ENCODE measurements at regions of chr15 and their contacts with region 1.

Region 1: DNA sequence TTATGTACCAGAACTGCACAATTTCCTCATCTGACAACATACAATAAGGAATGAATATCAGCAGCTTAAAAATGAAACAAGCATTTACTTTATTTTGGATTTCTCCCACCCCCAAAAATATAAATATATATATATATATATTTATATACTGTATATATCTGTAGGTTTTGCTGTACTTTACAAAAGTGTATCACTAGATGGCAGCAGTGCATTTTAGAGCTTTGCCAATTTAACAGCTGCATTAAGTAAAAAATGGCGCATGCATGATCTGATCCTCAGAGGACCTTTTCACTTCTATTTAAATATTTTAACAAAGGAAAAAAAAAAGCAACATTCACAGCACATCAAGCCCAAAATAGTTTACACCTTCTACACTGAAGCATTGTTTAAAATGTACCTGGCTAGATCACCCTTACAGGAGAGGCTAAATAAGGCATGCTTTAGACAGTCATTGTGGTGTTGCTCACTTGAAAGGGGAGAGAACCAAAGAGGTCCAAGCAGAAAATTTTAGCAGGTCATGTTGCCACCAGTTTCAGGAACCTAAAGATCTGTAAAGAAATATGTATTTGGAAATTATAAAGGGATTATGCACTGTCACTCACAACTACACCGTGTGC is 72.6 kb downstream of the NPTN start:
- DNase-seq: peak; percentile 26
- H3K4me3 Mint-ChIP-seq: no peak overlapping the region
- H3K27ac Mint-ChIP-seq: no peak overlapping the region
- H3K4me1 Mint-ChIP-seq: peaks cover 18% of the 10 kb centered on the region
- H3K27me3 Mint-ChIP-seq: no peaks in the 10 kb centered on the region
- CTCF ChIP-seq: no peak

Region 2: GRCh38 chr15:73305331-73306211 is 255.0 kb before region 1 on chr15:
- CTCF ChIA-PET with region 1: interaction called, 5 read pairs
- intact Hi-C with region 1: loop called (anchors 2 kb)
- DNase-seq: peak; percentile 64
- H3K4me3 Mint-ChIP-seq: no peak overlapping the region
- H3K27ac Mint-ChIP-seq: no peak overlapping the region
- H3K4me1 Mint-ChIP-seq: no peaks in the 10 kb centered on the region
- H3K27me3 Mint-ChIP-seq: no peaks in the 10 kb centered on the region
- CTCF ChIP-seq: peak; percentile 54

Region 3: GRCh38 chr15:73621286-73621826 is 60.7 kb after region 1 on chr15:
- CTCF ChIA-PET with region 1: no interaction called
- intact Hi-C with region 1: no loop called
- DNase-seq: no peak
- H3K4me3 Mint-ChIP-seq: no peak overlapping the region
- H3K27ac Mint-ChIP-seq: no peak overlapping the region
- H3K4me1 Mint-ChIP-seq: peaks cover 9% of the 10 kb centered on the region
- H3K27me3 Mint-ChIP-seq: no peaks in the 10 kb centered on the region
- CTCF ChIP-seq: no peak

Region 4: GRCh38 chr15:73633111-73633990 is 72.7 kb after region 1 on chr15 and contains the start of gene NPTN:
- CTCF ChIA-PET with region 1: interaction called, 26 read pairs
- intact Hi-C with region 1: loop called (anchors 1 kb)
- DNase-seq: peak; percentile 100
- H3K4me3 Mint-ChIP-seq: peak within 1 kb of the TSS; percentile 70
- H3K27ac Mint-ChIP-seq: peak within 1 kb of the TSS; percentile 88
- H3K4me1 Mint-ChIP-seq: peaks cover 53% of the 10 kb centered on the region
- H3K27me3 Mint-ChIP-seq: peaks cover 21% of the 10 kb centered on the region
- CTCF ChIP-seq: no peak
- total RNA-seq, gene NPTN: 190 TPM in 2 replicates

Region 5: DNA sequence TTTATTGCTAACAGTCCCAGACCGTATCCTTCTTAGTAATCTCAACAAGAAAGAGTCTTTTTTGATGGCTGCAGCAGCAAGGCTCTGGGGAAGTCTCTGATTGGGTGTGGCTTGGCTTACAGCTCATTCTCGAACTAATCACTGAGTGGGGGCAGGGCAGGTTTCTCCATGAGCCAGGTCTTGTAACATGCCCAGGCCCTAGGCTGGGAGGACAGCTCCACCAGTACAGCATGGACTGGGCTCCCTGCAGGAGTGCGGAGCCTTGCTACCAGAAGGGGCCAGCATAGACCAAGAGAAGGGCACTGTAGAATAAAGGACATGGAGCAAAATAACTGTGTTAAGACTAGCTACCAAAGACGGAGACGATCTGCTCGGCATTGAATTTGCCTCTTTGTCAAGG is 130.8 kb after region 1 on chr15:
- CTCF ChIA-PET with region 1: interaction called, 3 read pairs
- intact Hi-C with region 1: loop called (anchors 5 kb)
- DNase-seq: no peak
- H3K4me3 Mint-ChIP-seq: no peak overlapping the region
- H3K27ac Mint-ChIP-seq: no peak overlapping the region
- H3K4me1 Mint-ChIP-seq: peaks cover 25% of the 10 kb centered on the region
- H3K27me3 Mint-ChIP-seq: no peaks in the 10 kb centered on the region
- CTCF ChIP-seq: no peak

Region 6: DNA sequence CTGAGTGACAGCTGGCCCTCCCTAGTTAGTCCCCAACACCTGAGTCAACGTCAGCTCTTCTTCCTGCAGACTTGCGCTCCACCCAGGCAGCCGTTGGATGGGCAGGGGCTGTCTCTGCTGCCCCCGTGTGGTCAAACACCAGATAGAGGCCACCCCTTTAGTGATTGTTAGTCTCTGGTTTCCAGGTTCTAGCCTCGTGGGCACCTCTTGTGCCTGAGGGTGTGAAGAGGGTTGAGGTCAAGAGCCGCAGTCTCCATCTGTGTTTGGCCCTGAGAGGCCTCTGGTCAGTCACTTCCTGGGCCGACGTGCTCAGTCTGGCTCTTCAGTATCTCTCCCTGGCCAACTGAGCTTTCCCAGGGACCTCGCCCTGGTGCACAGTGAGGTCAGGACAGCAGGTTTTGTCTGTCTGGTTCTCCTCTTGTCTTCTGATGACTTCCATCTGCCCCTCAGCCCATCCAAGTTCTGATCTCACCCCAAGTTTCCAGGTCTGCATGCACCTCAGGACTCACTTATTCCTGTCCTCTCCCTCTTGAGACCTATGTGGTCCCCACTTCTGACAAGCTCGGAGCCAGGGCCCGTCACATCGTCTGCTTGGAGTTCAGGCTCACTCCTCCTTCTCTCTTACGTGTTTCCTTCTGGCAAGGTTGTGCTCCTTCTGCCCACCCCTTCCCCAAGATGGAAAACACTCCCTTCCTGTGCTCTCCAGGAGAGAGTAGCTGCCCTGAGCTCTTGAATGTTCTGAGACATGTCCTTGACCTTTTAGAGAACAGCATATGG is 144.4 kb after region 1 on chr15:
- CTCF ChIA-PET with region 1: interaction called, 15 read pairs
- intact Hi-C with region 1: loop called (anchors 1 kb)
- DNase-seq: peak; percentile 74
- H3K4me3 Mint-ChIP-seq: no peak overlapping the region
- H3K27ac Mint-ChIP-seq: no peak overlapping the region
- H3K4me1 Mint-ChIP-seq: no peaks in the 10 kb centered on the region
- H3K27me3 Mint-ChIP-seq: no peaks in the 10 kb centered on the region
- CTCF ChIP-seq: peak; percentile 81

Region 7: DNA sequence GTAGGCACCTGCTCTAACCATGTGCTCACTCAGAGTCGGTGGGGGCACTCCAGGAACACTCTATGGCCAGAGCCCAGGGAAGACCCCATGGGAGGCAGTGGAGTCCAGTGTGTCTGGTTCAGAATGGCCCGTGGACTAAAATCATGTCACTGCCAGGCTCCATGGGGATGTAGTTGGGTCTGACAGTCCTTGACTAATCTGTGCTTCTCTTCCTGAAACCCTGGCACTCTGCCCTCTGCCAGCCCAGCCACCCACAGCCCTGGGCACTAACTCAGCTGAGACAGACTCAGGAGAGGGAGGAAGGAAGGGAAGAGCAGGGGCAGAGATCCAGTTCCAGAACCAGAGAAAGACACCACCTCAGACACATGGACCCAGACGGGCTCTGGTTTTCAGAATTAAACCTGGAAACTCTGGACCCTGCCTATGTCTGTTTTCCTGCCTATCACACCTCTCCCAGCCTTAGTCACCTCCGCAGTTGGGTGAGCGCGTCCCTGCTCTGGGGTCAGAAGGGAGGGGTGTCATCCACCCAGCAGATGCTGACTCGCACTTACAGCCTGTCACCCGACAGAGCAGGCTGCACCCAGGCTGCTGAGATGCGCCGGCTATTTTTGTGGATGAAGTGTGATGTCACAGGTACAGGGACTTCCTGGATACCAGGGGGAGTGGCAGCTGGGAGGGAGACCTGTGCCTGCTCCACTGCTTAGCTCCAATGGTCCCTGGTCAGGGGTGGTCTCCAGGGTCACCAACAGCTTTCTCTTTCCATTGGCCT is 249.3 kb after region 1 on chr15:
- CTCF ChIA-PET with region 1: no interaction called
- intact Hi-C with region 1: no loop called
- DNase-seq: peak; percentile 32
- H3K4me3 Mint-ChIP-seq: no peak overlapping the region
- H3K27ac Mint-ChIP-seq: no peak overlapping the region
- H3K4me1 Mint-ChIP-seq: no peaks in the 10 kb centered on the region
- H3K27me3 Mint-ChIP-seq: peaks cover 100% of the 10 kb centered on the region
- CTCF ChIP-seq: no peak